Right ventricle myocardium inferior (tissue), 1 donor: ENCODE measurements at regions of chr3 and their contacts with region 1.

Region 1: GRCh38 chr3:176430244-176431037 is 766.8 kb downstream of the TBL1XR1 start:
- DNase-seq: no peak
- ATAC-seq: no peak

Region 2: DNA sequence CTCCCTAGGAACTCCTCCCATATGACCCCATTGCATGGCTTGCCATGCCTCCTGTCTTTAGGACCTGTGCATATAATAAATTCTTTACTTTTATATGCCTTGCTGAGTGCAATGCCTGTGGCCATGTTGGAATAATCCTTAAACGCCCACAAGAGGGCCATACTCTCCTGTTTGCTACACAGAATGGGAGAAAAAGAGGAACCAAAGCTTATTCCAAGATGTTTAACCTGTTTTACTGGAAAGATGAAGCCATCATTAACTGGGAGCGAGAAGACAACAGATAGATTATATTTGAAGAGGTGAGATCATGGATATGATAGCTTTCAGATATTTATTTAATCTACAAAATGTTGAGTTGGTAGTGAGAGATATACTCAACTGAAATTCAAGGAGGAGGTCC is 473.4 kb before region 1 on chr3:
- intact Hi-C with region 1: loop called (anchors 10 kb)
- DNase-seq: no peak
- ATAC-seq: no peak

Region 3: DNA sequence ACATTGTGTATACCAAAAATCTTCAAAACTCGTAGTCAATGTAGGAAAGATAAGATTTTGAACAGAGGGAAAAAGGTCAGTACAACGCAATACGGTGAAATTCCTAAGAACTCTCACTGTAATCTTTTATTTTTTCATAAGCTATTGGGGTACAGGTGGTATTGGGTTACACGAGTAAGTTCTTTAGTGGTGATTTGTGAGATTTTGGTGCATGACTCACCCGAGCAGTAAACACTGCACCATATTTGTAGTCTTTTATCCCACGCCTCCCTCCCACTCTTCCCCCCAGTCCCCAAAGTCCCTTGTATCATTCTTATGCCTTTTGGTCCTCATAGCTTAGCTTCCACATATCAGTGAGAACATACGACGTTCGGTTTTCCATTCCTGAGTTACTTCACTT is 48.9 kb after region 1 on chr3:
- intact Hi-C with region 1: no loop called
- DNase-seq: no peak
- ATAC-seq: no peak